ENCODE measurements at regions of chr18 and their contacts with region 1.

Region 1: GRCh38 chr18:9082711-9083510 is 19.6 kb upstream of the NDUFV2 start:
- DNase-seq: peak; percentile 82
- H3K4me3 Mint-ChIP-seq: peak overlapping the region; percentile 70
- H3K27ac Mint-ChIP-seq: peak overlapping the region; percentile 100
- H3K4me1 Mint-ChIP-seq: peaks cover 51% of the 10 kb centered on the region
- H3K27me3 Mint-ChIP-seq: no peaks in the 10 kb centered on the region

Region 2: DNA sequence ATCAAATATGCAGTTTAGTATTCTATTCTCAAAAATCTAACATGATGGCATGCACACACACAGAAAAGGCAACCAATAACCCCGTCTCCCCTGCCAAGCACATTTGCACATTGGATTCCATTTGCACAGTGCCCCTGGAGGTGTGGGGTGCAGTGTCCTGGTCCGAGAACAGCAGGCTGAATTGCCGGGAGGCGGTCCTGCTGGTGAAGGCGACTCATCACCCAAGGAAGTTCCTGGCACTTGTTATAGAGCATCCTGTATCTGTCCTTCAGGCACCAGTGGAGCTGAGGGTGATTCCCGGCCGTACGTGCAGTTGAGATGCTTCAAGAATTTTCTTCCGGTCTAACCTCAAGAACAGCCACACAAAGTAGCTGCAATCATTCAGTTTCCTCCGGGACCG is 546.7 kb before region 1 on chr18:
- CTCF ChIA-PET with region 1: no interaction called
- POLR2A ChIA-PET with region 1: no interaction called
- intact Hi-C with region 1: no loop called
- DNase-seq: no peak
- H3K4me3 Mint-ChIP-seq: no peak overlapping the region
- H3K27ac Mint-ChIP-seq: no peak overlapping the region
- H3K4me1 Mint-ChIP-seq: no peaks in the 10 kb centered on the region
- H3K27me3 Mint-ChIP-seq: no peaks in the 10 kb centered on the region

Region 3: DNA sequence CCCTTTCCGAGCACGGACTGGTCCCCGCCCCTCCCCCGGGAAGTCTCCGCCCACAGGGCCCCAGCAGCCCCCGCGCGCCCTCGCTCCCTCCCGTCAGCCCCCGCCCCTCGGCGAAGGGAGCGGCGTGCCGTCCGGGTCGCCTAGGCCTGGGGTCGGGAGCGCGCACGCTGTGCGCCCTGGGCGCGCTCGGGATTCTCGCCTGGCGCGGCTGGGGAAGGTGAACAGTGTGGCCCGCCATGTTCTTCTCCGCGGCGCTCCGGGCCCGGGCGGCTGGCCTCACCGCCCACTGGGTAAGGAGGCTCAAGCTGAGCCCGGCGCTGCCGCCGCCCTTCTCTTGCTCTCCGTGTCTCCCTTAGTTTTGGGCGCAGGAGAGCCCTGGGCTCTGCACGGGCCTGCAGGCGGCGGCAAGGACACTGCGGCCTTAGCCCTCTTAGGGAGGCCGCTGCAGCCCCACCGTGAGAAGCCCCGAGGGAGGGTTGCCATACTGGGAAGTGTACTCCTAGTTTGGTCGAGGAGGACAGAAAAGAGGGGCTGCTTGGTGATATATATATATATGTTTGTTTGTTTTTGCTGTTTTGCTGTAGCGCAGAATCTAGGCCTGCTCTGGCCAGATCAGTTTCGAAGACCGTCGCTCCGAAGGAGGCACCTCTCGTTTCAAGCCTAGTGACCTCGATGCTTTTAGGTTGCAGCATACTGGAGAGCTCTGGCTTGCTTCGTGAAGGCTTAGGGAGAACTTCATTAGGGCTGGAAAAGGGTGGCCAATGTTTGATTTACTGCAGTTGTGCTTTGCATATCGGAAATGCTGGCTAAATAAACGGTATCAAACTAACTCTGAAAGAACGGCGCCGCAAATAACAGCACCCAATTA is 19.8 kb after region 1 on chr18 and contains the start of gene NDUFV2:
- CTCF ChIA-PET with region 1: interaction called, 22 read pairs
- POLR2A ChIA-PET with region 1: interaction called, 149 read pairs
- intact Hi-C with region 1: loop called (anchors 2 kb)
- DNase-seq: peak; percentile 99
- H3K4me3 Mint-ChIP-seq: peak within 1 kb of the TSS; percentile 90
- H3K27ac Mint-ChIP-seq: peak within 1 kb of the TSS; percentile 95
- H3K4me1 Mint-ChIP-seq: peaks cover 39% of the 10 kb centered on the region
- H3K27me3 Mint-ChIP-seq: no peaks in the 10 kb centered on the region
- total RNA-seq, gene NDUFV2: 535 to 552 TPM

Region 4: GRCh38 chr18:9117980-9118841 is 35.3 kb after region 1 on chr18:
- CTCF ChIA-PET with region 1: interaction called, 14 read pairs
- POLR2A ChIA-PET with region 1: interaction called, 61 read pairs
- intact Hi-C with region 1: loop called (anchors 1 kb)
- DNase-seq: no peak
- H3K4me3 Mint-ChIP-seq: peak overlapping the region; percentile 72
- H3K27ac Mint-ChIP-seq: peak overlapping the region; percentile 97
- H3K4me1 Mint-ChIP-seq: peaks cover 81% of the 10 kb centered on the region
- H3K27me3 Mint-ChIP-seq: no peaks in the 10 kb centered on the region

Region 5: DNA sequence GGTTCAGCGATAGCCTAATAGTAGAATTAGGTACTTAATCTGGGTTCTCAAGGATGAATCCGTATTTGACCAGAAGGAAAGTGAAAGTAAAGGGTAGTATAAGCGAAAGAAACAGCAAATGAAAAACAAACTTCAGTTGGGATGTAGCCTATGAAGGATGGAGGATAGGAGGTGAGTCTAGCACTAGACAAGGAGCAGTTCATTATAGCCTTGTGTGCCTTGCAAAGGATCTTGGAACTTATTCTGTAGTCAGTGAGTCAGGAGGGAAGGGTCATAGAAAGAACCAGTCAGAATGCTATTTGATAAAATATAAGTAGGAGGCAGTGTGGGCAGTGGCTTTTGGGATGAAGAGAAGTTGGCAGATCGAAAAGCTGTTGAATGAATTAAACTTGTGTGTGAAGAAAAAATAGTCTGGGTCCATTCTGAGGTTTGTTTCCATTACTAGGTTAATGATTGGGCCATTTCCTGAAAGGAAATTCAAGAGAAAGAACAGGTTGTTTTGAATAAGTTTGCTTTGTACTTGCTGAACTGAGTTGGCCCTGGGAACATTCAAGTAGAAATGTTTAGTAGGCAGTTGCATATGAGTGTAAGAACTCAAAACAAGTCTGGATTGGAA is 102.2 kb after region 1 on chr18:
- CTCF ChIA-PET with region 1: no interaction called
- POLR2A ChIA-PET with region 1: no interaction called
- intact Hi-C with region 1: loop called (anchors 1 kb)
- DNase-seq: peak; percentile 44
- H3K4me3 Mint-ChIP-seq: peak overlapping the region; percentile 65
- H3K27ac Mint-ChIP-seq: peak overlapping the region; percentile 73
- H3K4me1 Mint-ChIP-seq: peaks cover 65% of the 10 kb centered on the region
- H3K27me3 Mint-ChIP-seq: no peaks in the 10 kb centered on the region

Region 6: DNA sequence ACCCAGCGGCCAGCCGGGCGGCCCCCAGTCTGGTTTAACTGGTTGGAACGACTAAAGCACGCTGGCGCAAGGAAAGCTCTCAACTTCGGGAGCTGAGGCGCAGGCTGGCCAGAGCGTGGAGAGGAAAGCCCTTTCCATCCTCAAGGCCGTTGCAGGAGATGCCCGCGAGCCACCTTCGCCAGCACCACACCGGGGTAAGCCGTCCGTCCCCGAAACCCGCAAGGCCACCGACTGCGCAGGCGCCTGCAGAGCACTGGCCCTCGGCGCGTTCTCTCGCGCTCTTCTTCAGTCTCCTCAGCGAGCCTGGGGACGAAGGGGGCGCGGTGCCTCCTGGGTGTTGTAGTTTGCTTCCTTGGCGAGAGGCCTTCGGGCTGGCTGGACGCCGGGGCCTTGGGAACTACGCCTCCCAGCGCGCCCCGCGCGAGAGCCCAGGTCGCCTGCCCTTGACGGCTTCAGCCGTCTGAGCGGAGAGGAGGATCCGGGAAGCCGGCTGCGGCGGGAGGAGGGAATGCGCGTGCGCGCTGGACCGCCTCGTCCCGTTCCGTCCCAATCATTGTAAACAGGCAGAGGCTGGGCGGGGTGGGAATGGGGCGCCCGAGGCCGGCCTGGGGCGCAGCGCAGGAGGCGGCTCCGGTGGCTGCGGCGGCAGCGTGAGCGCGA is 392.2 kb after region 1 on chr18 and contains the start of gene RALBP1:
- CTCF ChIA-PET with region 1: no interaction called
- POLR2A ChIA-PET with region 1: interaction called, 5 read pairs
- intact Hi-C with region 1: loop called (anchors 2 kb)
- DNase-seq: peak; percentile 99
- H3K4me3 Mint-ChIP-seq: peak within 1 kb of the TSS; percentile 92
- H3K27ac Mint-ChIP-seq: peak within 1 kb of the TSS; percentile 93
- H3K4me1 Mint-ChIP-seq: peaks cover 28% of the 10 kb centered on the region
- H3K27me3 Mint-ChIP-seq: peaks cover 11% of the 10 kb centered on the region
- total RNA-seq, gene RALBP1: 53.1 to 54.7 TPM